ENCODE measurements at regions of chr20 and their contacts with region 1.

Region 1: GRCh38 chr20:45293041-45294002 is 13.3 kb upstream of the RBPJL start:
- DNase-seq: peak; percentile 90 to 95
- H3K4me3 ChIP-seq: peak overlapping the region; percentile 63
- H3K4me3 Mint-ChIP-seq: peak overlapping the region; percentile 72
- H3K27ac Mint-ChIP-seq: no peak overlapping the region
- H3K4me1 ChIP-seq: 0 out of 2 replicates have a peak, but pooled peaks cover 3% of the 10 kb centered on the region
- H3K4me1 Mint-ChIP-seq: no peaks in the 10 kb centered on the region
- H3K27me3 ChIP-seq: peaks cover 4% of the 10 kb centered on the region; the same call in 1 of the 2 replicates
- H3K27me3 Mint-ChIP-seq: peaks cover 13% of the 10 kb centered on the region
- CTCF ChIP-seq: peak; percentile 100

Region 2: DNA sequence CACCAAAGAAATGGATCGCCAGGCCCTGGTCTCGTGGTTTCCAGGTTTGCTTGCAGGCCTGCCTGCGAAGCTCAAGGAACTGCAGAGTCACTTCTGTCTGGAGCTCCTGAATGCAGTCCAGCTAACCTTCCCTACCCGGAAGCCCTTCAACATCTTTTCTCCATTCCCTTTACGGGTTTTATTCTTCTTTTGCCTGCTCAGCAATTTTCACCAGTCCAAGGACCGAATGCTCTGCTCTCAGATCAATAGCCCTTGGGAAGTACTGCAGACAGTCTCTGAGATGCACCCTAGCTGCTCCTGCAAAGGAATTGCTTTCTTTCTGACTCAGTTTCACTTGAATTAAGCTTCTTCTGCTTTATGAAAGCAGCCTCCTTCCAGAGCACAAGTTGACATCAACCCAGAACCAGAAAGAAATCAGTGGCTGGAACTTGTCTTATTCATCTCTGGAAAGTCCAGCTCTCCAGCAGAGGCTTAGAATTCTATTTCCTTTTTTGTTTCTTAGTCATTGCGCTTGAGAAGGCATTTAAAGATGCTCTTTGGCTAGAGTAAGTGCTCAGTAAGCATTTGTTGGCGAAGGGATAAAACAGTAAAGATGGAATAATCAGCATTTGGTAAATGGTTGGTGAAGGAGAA is 426.5 kb before region 1 on chr20:
- CTCF ChIA-PET with region 1: no interaction called
- POLR2A ChIA-PET with region 1: no interaction called
- intact Hi-C with region 1: no loop called
- DNase-seq: no peak
- H3K4me3 ChIP-seq: no peak overlapping the region
- H3K4me3 Mint-ChIP-seq: no peak overlapping the region
- H3K27ac Mint-ChIP-seq: no peak overlapping the region
- H3K4me1 ChIP-seq: peaks cover 11% of the 10 kb centered on the region
- H3K4me1 Mint-ChIP-seq: peaks cover 14% of the 10 kb centered on the region
- H3K27me3 ChIP-seq: no peaks in the 10 kb centered on the region
- H3K27me3 Mint-ChIP-seq: peaks cover 11% of the 10 kb centered on the region
- CTCF ChIP-seq: no peak

Region 3: DNA sequence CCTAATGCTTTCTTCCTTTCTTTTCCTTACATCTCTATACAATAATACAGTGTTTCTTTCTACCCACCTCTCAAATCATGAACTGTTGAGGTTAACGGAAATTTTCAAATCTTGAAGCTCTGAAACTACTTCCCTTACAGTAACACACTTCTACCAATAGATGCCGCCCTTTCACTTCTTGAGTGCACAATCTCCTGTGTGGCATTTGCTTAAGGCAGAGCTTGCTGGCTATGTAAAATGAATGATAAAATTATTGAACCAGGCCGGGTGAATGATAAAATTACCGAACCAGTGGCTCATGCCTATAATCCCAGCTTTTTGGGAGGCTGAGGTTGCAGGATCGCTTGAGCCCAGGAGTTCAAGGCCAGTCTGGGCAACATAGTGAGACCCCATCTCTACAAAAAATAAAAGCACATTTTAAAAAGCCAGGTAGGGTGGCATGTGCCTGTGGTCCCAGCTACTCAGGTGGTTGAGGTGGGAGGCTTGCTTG is 249.2 kb before region 1 on chr20:
- CTCF ChIA-PET with region 1: interaction called, 67 read pairs
- POLR2A ChIA-PET with region 1: no interaction called
- intact Hi-C with region 1: loop called (anchors 1 kb)
- DNase-seq: peak; percentile 67 to 80
- H3K4me3 ChIP-seq: no peak overlapping the region
- H3K4me3 Mint-ChIP-seq: no peak overlapping the region
- H3K27ac Mint-ChIP-seq: no peak overlapping the region
- H3K4me1 ChIP-seq: peaks cover 4% of the 10 kb centered on the region; the same call in 1 of the 2 replicates
- H3K4me1 Mint-ChIP-seq: peaks cover 6% of the 10 kb centered on the region
- H3K27me3 ChIP-seq: no peaks in the 10 kb centered on the region
- H3K27me3 Mint-ChIP-seq: no peaks in the 10 kb centered on the region
- CTCF ChIP-seq: peak; percentile 97 to 99

Region 4: GRCh38 chr20:45138561-45139300 is 154.6 kb before region 1 on chr20:
- CTCF ChIA-PET with region 1: interaction called, 20 read pairs
- POLR2A ChIA-PET with region 1: no interaction called
- intact Hi-C with region 1: loop called (anchors 1 kb)
- DNase-seq: peak; percentile 85 to 89
- H3K4me3 ChIP-seq: no peak overlapping the region
- H3K4me3 Mint-ChIP-seq: no peak overlapping the region
- H3K27ac Mint-ChIP-seq: no peak overlapping the region
- H3K4me1 ChIP-seq: peaks cover 7% of the 10 kb centered on the region
- H3K4me1 Mint-ChIP-seq: no peaks in the 10 kb centered on the region
- H3K27me3 ChIP-seq: peaks cover 3% of the 10 kb centered on the region; the same call in 1 of the 2 replicates
- H3K27me3 Mint-ChIP-seq: peaks cover 11% of the 10 kb centered on the region
- CTCF ChIP-seq: peak; percentile 97 to 99

Region 5: DNA sequence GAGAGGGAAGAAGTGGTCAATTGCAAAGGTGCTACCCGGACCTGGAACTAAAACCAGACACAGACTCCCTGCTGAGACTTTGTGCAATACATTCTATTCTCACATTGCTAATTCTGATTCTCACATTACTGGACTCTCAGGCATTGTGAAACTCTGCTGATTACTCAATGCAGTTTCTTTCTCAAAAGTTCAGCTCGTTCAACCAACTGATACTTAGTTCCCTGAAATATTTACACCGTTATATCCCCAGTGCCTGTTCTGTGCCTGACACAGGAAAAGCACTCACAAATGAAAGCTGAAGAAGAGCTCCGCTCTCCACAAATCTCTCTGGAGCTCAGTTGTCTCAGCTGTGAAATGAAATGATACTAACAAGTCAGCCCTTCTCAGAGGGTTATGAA is 38.5 kb before region 1 on chr20:
- CTCF ChIA-PET with region 1: interaction called, 10 read pairs
- POLR2A ChIA-PET with region 1: no interaction called
- intact Hi-C with region 1: no loop called
- DNase-seq: no peak
- H3K4me3 ChIP-seq: no peak overlapping the region
- H3K4me3 Mint-ChIP-seq: no peak overlapping the region
- H3K27ac Mint-ChIP-seq: no peak overlapping the region
- H3K4me1 ChIP-seq: peaks cover 6% of the 10 kb centered on the region
- H3K4me1 Mint-ChIP-seq: peaks cover 6% of the 10 kb centered on the region
- H3K27me3 ChIP-seq: no peaks in the 10 kb centered on the region
- H3K27me3 Mint-ChIP-seq: peaks cover 9% of the 10 kb centered on the region
- CTCF ChIP-seq: no peak

Region 6: GRCh38 chr20:45341939-45342859 is 48.9 kb after region 1 on chr20:
- CTCF ChIA-PET with region 1: interaction called, 12 read pairs
- POLR2A ChIA-PET with region 1: no interaction called
- intact Hi-C with region 1: no loop called
- DNase-seq: peak; percentile 90 to 93
- H3K4me3 ChIP-seq: peak overlapping the region; percentile 24
- H3K4me3 Mint-ChIP-seq: peak overlapping the region; percentile 97
- H3K27ac Mint-ChIP-seq: peak overlapping the region; percentile 77
- H3K4me1 ChIP-seq: peaks cover 99% of the 10 kb centered on the region
- H3K4me1 Mint-ChIP-seq: peaks cover 95% of the 10 kb centered on the region
- H3K27me3 ChIP-seq: no peaks in the 10 kb centered on the region
- H3K27me3 Mint-ChIP-seq: no peaks in the 10 kb centered on the region
- CTCF ChIP-seq: no peak

Region 7: DNA sequence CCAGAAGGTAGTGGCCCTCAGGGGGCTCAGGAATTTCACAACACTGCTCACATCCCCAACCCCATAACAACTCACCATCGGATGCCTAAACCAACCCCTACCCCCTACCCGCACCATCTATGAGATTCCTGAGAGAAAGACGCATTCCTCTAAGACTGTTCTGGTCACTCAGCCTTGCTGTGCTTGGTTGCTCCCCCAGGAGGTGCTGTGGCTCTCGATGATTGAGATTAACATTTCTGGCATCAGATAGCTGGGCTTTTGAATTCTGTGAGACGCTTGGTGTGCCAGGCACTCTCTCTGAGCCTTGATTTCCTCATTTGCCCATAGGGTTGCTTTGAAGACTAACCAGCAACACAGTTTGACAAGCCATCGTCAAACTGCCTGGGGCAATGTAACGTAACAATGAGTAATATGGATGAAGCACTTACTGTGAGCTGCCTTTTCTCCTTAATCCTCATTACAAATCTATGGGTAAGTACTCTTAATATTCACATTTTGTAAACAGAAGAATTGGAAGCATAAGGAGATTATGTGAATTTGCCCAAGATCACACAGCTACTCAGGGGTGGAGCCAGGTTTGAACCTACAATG is 245.0 kb after region 1 on chr20:
- CTCF ChIA-PET with region 1: no interaction called
- POLR2A ChIA-PET with region 1: no interaction called
- intact Hi-C with region 1: no loop called
- DNase-seq: no peak
- H3K4me3 ChIP-seq: no peak overlapping the region
- H3K4me3 Mint-ChIP-seq: no peak overlapping the region
- H3K27ac Mint-ChIP-seq: no peak overlapping the region
- H3K4me1 ChIP-seq: no peaks in the 10 kb centered on the region
- H3K4me1 Mint-ChIP-seq: no peaks in the 10 kb centered on the region
- H3K27me3 ChIP-seq: peaks cover 6% of the 10 kb centered on the region
- H3K27me3 Mint-ChIP-seq: peaks cover 20% of the 10 kb centered on the region
- CTCF ChIP-seq: peak in 1 of 2 experiments; percentile 17

Measured in Caco-2 (cell line).